B cell (primary cell): ENCODE measurements at regions of chr3 and their contacts with region 1.

Region 1: GRCh38 chr3:99825004-99825640 is 7.5 kb downstream of the CMSS1 start:
- DNase-seq: no peak
- ATAC-seq: no peak
- H3K4me3 ChIP-seq: no peak overlapping the region
- H3K4me3 Mint-ChIP-seq: no peak overlapping the region
- H3K27ac ChIP-seq: no peak overlapping the region
- H3K27ac Mint-ChIP-seq: no peak overlapping the region
- H3K4me1 ChIP-seq: no peaks in the 10 kb centered on the region
- H3K4me1 Mint-ChIP-seq: peaks cover 5% of the 10 kb centered on the region
- H3K27me3 ChIP-seq: no peaks in the 10 kb centered on the region
- H3K27me3 Mint-ChIP-seq: no peaks in the 10 kb centered on the region
- CTCF ChIP-seq: no peak

Region 2: DNA sequence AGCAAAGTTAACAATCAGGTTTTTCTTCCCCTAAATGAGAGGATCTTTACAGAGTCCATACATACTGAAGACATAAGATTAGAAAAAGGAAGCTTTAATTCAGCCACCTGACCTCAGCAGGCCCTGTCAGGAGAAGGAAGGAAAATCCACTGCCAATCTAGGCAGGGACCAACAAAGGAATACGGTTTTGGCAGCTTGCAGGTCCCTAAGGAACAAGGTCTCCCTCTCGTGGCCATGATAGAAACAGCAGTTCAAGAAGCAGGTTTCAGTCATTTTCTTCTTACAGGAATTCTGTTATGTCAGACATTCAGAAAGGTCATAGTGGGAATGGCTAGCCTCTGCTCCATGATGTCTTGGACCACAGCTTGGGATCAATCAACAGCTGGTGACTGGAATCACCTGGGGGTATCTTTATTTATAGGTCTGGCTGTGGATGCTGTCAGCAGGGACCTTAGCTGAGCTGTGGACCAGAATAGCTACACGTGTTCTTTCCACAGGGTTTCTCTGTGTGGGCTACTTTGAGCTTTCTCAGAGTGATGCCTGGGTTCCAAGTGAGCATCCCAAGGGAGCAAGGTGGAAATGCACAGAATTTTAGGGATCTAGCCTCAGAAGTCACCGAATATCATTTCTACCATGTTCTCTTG is 16.8 kb before region 1 on chr3:
- CTCF ChIA-PET with region 1: interaction called, 11 read pairs
- POLR2A ChIA-PET with region 1: no interaction called
- intact Hi-C with region 1: no loop called
- DNase-seq: peak; percentile 64
- ATAC-seq: peak; percentile 41
- H3K4me3 ChIP-seq: no peak overlapping the region
- H3K4me3 Mint-ChIP-seq: no peak overlapping the region
- H3K27ac ChIP-seq: no peak overlapping the region
- H3K27ac Mint-ChIP-seq: no peak overlapping the region
- H3K4me1 ChIP-seq: no peaks in the 10 kb centered on the region
- H3K4me1 Mint-ChIP-seq: no peaks in the 10 kb centered on the region
- H3K27me3 ChIP-seq: no peaks in the 10 kb centered on the region
- H3K27me3 Mint-ChIP-seq: no peaks in the 10 kb centered on the region
- CTCF ChIP-seq: peak; percentile 90

Region 3: DNA sequence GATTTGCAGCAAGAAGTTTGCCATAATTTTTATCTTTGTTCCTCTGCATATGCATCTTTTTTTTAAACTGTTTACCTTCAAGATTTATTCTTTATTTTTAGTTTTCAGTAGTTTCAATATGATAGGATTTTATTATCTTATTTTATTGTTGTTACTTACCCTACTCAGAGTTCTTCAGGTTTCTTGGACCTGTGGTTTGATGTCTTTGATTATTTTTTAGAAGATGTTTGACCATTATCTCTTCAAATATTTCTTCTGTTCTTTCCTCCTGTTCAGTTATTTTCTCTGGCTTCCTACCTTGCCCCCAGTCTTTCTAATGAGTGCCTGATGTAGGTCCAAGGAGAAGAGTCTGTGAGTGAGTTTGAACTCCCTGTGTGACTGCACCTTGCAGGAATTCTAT is 151.5 kb after region 1 on chr3:
- CTCF ChIA-PET with region 1: no interaction called
- POLR2A ChIA-PET with region 1: no interaction called
- intact Hi-C with region 1: no loop called
- DNase-seq: no peak
- ATAC-seq: no peak
- H3K4me3 ChIP-seq: no peak overlapping the region
- H3K4me3 Mint-ChIP-seq: no peak overlapping the region
- H3K27ac ChIP-seq: no peak overlapping the region
- H3K27ac Mint-ChIP-seq: no peak overlapping the region
- H3K4me1 ChIP-seq: no peaks in the 10 kb centered on the region
- H3K4me1 Mint-ChIP-seq: peaks cover 1% of the 10 kb centered on the region
- H3K27me3 ChIP-seq: no peaks in the 10 kb centered on the region
- H3K27me3 Mint-ChIP-seq: no peaks in the 10 kb centered on the region
- CTCF ChIP-seq: no peak